ENCODE measurements at regions of chr10 and their contacts with region 1.

Region 1: GRCh38 chr10:26486991-26487850 is 49.1 kb downstream of the APBB1IP start:
- DNase-seq: peak; percentile 86
- H3K4me3 Mint-ChIP-seq: peak overlapping the region; percentile 44
- H3K27ac Mint-ChIP-seq: peak overlapping the region; percentile 86
- H3K4me1 Mint-ChIP-seq: peaks cover 66% of the 10 kb centered on the region
- H3K27me3 Mint-ChIP-seq: no peaks in the 10 kb centered on the region

Region 2: DNA sequence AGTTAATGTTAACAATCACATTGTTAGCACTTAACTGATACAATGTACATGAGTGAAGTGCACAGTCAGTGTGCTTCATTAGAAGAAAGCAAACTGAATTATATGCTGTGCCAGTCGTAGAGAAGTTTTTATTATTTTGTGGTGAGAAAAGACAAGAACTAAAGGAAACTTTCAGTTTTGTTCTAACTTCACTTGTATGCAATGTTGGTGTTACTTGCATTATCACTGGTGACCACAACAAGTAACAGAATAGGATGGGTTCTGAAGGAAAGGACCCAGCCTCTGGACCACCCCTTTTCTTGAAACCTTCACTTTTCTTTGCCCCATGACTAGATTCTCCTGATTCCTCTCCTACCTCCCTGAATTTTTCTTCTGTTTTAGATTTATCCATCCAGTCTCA is 394.0 kb before region 1 on chr10:
- CTCF ChIA-PET with region 1: no interaction called
- POLR2A ChIA-PET with region 1: no interaction called
- intact Hi-C with region 1: no loop called
- DNase-seq: no peak
- H3K4me3 Mint-ChIP-seq: no peak overlapping the region
- H3K27ac Mint-ChIP-seq: no peak overlapping the region
- H3K4me1 Mint-ChIP-seq: no peaks in the 10 kb centered on the region
- H3K27me3 Mint-ChIP-seq: no peaks in the 10 kb centered on the region

Region 3: DNA sequence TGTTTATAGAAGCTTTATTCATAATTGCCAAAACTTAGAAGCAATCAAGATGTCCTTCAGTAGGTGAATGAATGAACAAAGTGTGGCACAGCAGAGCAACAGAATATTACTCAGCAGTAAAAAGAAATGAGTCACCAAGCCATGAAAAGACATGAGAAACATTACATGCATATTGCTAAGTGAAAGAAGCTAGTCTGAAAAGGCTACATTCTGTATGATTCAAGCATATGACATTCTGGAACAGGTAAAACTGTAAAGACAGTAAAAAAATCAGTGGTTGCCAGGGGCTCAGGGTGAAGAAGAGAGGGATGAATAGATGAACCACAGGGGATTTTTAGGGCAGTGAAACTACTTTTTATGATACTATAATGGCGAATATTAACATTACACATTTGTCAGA is 130.0 kb before region 1 on chr10:
- CTCF ChIA-PET with region 1: no interaction called
- POLR2A ChIA-PET with region 1: no interaction called
- intact Hi-C with region 1: loop called (anchors 1 kb)
- DNase-seq: peak; percentile 20
- H3K4me3 Mint-ChIP-seq: no peak overlapping the region
- H3K27ac Mint-ChIP-seq: no peak overlapping the region
- H3K4me1 Mint-ChIP-seq: peaks cover 11% of the 10 kb centered on the region
- H3K27me3 Mint-ChIP-seq: peaks cover 17% of the 10 kb centered on the region

Region 4: DNA sequence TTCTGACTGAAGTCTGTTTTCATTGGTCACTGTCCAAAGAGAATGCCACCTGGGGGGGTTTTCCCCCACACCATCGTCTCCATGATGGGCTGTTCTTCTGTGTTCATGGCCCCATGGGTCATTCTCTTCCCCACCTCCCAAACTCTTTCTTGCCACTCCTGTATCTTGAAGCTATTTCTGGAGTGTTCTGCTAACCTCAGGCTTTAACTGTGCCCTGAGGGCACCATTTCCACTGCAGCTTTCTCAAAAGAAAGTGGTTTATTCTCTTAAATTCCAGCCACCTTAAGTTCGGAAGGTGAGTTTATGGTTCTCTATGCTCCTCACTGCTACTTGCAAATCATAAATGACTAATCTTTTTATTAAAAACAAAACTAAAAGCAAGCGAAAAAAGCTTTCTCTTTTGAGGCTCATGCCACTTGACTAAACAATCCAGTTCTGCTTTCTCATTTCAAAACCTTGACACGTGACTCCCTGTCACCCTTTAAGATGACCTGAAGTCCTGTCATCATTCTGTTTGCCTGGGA is 56.5 kb before region 1 on chr10:
- CTCF ChIA-PET with region 1: no interaction called
- POLR2A ChIA-PET with region 1: no interaction called
- intact Hi-C with region 1: loop called (anchors 1 kb)
- DNase-seq: no peak
- H3K4me3 Mint-ChIP-seq: peak overlapping the region; percentile 41
- H3K27ac Mint-ChIP-seq: peak overlapping the region; percentile 84
- H3K4me1 Mint-ChIP-seq: peaks cover 27% of the 10 kb centered on the region
- H3K27me3 Mint-ChIP-seq: no peaks in the 10 kb centered on the region

Region 5: GRCh38 chr10:26437637-26438461 is 49.4 kb before region 1 on chr10 and contains the start of gene APBB1IP:
- CTCF ChIA-PET with region 1: interaction called, 3 read pairs
- POLR2A ChIA-PET with region 1: interaction called, 11 read pairs
- intact Hi-C with region 1: loop called (anchors 1 kb)
- DNase-seq: peak; percentile 66
- H3K4me3 Mint-ChIP-seq: peak within 1 kb of the TSS; percentile 93
- H3K27ac Mint-ChIP-seq: peak within 1 kb of the TSS; percentile 92
- H3K4me1 Mint-ChIP-seq: peaks cover 51% of the 10 kb centered on the region
- H3K27me3 Mint-ChIP-seq: no peaks in the 10 kb centered on the region
- total RNA-seq, gene APBB1IP: 50.1 to 52.1 TPM

Region 6: DNA sequence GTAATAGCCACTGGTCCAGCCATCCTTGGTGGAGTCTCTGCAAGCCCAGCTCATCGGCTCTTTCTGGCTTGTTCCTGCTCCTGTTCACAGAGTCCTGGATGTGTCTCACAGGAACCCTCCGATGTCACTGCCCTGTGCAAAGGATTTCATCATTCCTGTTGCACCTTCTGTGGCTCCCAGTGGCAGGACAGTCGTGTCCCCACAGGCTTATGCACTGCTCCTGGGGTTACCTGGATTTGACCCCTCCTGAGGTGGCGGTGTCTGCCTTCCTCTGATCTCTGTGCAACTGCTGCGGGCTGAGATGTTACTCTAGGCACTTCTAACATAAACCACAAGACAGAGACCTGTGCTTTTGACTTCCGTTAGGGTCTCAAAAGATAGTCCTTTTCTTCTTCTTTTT is 18.5 kb before region 1 on chr10:
- CTCF ChIA-PET with region 1: no interaction called
- POLR2A ChIA-PET with region 1: interaction called, 5 read pairs
- intact Hi-C with region 1: loop called (anchors 1 kb)
- DNase-seq: peak; percentile 53
- H3K4me3 Mint-ChIP-seq: peak overlapping the region; percentile 61
- H3K27ac Mint-ChIP-seq: peak overlapping the region; percentile 81
- H3K4me1 Mint-ChIP-seq: peaks cover 85% of the 10 kb centered on the region
- H3K27me3 Mint-ChIP-seq: no peaks in the 10 kb centered on the region

Region 7: DNA sequence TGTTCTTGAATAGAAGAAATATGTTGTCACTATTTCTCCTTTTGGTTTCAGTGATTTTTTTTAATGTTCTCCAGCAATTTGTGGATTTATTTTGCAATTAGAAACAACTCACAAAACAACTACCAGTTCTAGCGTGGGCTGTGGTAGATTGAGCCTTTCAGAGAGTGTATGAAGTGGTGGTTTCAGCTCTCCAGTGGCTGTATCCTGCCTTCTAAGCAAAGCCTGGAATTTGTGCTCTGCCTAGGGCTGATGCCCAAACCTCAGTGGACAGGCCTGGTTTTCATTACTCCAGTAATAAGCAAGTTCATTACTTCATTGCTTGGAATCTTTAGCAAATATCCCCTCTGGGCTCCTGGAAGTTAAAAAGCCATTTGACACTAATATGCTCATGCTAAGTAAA is 13.2 kb before region 1 on chr10:
- CTCF ChIA-PET with region 1: interaction called, 3 read pairs
- POLR2A ChIA-PET with region 1: interaction called, 5 read pairs
- intact Hi-C with region 1: loop called (anchors 1 kb)
- DNase-seq: no peak
- H3K4me3 Mint-ChIP-seq: no peak overlapping the region
- H3K27ac Mint-ChIP-seq: peak overlapping the region; percentile 92
- H3K4me1 Mint-ChIP-seq: peaks cover 80% of the 10 kb centered on the region
- H3K27me3 Mint-ChIP-seq: no peaks in the 10 kb centered on the region

Region 8: GRCh38 chr10:27155066-27155754 is 668.0 kb after region 1 on chr10 and contains the start of gene MASTL:
- CTCF ChIA-PET with region 1: no interaction called
- POLR2A ChIA-PET with region 1: no interaction called
- intact Hi-C with region 1: loop called (anchors 10 kb)
- DNase-seq: peak; percentile 96
- H3K4me3 Mint-ChIP-seq: peak within 1 kb of the TSS; percentile 97
- H3K27ac Mint-ChIP-seq: peak within 1 kb of the TSS; percentile 100
- H3K4me1 Mint-ChIP-seq: peaks cover 39% of the 10 kb centered on the region
- H3K27me3 Mint-ChIP-seq: no peaks in the 10 kb centered on the region
- total RNA-seq, gene MASTL: 44.2 to 50.4 TPM